Spleen (tissue), 13 donors: ENCODE measurements at regions of chr17 and their contacts with region 1.

Region 1: DNA sequence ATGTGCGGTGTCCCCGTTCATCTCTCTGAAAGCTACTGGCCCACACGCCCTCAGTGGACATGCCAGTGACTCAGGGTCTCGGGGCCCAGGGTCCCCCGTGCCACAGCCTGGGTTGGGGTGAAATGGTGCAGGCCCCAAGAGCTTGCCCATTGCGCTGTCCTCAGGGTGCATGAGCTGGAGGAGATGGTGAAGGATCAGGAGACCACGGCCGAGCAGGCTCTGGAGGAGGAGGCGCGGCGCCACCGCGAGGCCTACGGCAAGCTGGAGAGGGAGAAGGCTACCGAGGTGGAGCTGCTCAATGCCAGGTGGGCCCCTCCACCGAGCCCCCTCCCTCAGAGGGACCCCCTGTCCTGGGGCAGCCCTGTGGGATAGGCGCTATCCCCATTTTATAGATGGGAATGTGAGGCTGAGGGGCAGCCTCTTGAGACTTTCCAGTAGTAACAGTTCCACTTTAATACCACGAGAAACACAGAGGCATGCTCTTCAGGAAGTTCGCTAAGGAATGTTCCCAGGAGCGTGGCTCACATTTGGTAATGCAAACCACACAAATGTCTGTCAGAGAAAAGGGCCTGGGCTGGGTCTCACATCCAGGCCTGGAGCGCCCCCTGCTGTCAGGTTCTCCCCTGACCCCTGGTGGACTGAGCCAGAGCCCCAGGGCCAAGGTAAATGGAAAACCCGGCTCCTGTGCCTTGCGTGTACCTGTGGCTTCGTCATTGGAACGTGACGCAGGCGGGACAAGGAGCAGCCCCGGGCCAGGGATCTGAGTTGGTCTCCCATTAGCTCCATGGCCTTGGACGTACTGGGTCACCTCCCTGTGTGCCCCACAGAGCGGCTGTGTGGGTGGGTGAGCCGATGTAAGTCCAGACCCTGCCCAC is 133.7 kb downstream of the RAB11FIP4 start:
- DNase-seq: peak; percentile 97
- H3K4me3 ChIP-seq: no peak overlapping the region
- H3K27ac ChIP-seq: no peak overlapping the region
- H3K4me1 ChIP-seq: peaks cover 0 to 13% (median 9%) of the 10 kb centered on the region in 6 donors
- H3K27me3 ChIP-seq: no peaks in the 10 kb centered on the region
- CTCF ChIP-seq: peak; percentile 87 to 97 (median 94)
- POLR2A ChIP-seq: no peak

Region 2: DNA sequence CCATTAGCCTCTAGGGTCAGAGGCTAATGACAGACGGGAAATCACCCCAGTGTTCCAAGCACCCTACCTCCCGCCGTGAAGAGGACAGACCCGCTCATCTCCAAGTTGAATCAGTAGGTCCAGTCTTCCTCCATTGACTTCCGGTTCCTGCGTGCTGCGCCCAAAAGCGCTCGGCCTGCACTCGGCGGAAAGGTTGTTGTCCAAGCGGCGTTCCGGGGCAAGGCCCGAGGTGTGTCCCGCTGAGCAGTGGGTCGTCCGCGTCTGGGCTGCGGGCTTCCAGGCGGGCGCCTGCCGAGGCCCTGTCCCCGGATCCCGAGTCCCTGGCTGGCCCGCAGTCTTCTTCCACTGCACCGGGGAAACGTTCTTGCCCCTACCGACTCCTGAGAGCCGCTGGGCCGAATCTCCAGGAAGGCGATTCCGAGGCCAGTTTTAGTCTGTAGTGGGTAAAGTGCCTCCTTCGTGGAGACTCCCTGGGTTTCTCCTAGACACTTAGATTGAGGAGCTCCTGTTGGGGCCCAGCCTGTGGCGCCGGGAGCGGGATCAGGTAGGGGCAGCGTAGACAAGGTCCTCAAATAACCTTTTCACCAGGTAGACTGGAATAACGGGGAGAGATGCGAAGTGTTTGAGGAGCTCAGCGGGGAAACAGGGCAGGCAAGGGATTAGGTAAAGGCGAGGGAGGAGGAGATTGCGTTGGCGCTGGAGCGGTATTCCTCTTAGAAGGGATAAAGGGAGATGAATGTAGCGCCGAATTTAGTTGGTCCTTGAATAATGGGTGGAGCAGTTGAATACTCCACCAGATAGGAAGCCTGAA is 618.9 kb before region 1 on chr17 and contains the start of gene TEFM:
- intact Hi-C with region 1: no loop called
- DNase-seq: peak; percentile 96
- H3K4me3 ChIP-seq: peak within 1 kb of the TSS; percentile 65 to 90 (median 70)
- H3K27ac ChIP-seq: peak within 1 kb of the TSS; percentile 82 to 93 (median 86)
- H3K4me1 ChIP-seq: peaks cover 15 to 69% (median 34%) of the 10 kb centered on the region in 6 donors
- H3K27me3 ChIP-seq: no peaks in the 10 kb centered on the region
- CTCF ChIP-seq: peak in 2 of 11 experiments; percentile 15 to 21
- POLR2A ChIP-seq: peak in 2 of 3 donors; percentile 7 to 80
- total RNA-seq, gene TEFM: 16.0 to 33.4 (median 18.0) TPM

Region 3: GRCh38 chr17:31437720-31438420 is 87.3 kb before region 1 on chr17:
- intact Hi-C with region 1: loop called (anchors 5 kb)
- DNase-seq: no peak
- H3K4me3 ChIP-seq: no peak overlapping the region
- H3K27ac ChIP-seq: no peak overlapping the region
- H3K4me1 ChIP-seq: peaks cover 5 to 19% (median 16%) of the 10 kb centered on the region in 6 donors
- H3K27me3 ChIP-seq: peaks cover 0 to 25% (median 0%) of the 10 kb centered on the region in 7 donors
- CTCF ChIP-seq: no peak
- POLR2A ChIP-seq: no peak

Region 4: DNA sequence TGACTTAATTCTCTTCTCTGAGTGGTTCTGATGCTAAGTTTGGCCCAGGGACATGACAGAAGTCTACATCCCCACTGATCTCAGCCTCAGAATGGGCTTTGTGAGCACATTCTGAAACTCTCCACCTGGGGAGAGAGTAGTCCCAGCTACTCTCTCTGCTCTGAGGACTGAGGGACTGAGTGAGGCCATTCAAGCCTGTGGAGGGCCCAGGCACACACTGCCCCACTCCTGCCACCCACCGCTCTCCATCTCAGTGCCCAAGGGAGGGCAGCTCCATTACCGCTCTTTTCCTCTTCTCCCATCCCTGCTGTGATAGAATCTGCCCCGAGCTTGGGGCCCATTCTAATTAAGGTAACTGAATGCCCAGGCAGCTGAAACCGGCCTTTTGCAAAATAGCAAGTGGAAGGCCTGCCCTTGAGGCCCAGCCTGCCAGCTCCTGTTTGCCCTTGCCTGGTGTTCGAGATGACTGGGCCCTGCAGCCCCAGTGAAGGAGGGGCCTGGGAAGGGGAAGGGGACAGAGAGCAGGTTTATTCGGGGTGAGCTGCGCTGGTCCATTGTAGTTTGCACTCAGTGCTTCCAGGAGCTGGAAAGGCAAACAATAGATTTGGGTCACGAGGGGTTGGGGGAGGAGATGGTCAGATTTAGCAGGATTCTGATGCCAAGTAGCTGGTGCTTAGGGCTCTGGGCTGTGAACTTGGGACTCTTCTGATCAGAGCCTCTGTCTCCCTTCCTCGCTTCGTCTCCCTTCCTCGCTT is 57.5 kb before region 1 on chr17:
- intact Hi-C with region 1: no loop called
- DNase-seq: no peak
- H3K4me3 ChIP-seq: no peak overlapping the region
- H3K27ac ChIP-seq: no peak overlapping the region
- H3K4me1 ChIP-seq: peaks cover 0 to 11% (median 0%) of the 10 kb centered on the region in 6 donors
- H3K27me3 ChIP-seq: peaks cover 0 to 4% (median 0%) of the 10 kb centered on the region in 7 donors
- CTCF ChIP-seq: no peak
- POLR2A ChIP-seq: no peak